H1 (cell line): ENCODE measurements at regions of chr5 and their contacts with region 1.

Region 1: DNA sequence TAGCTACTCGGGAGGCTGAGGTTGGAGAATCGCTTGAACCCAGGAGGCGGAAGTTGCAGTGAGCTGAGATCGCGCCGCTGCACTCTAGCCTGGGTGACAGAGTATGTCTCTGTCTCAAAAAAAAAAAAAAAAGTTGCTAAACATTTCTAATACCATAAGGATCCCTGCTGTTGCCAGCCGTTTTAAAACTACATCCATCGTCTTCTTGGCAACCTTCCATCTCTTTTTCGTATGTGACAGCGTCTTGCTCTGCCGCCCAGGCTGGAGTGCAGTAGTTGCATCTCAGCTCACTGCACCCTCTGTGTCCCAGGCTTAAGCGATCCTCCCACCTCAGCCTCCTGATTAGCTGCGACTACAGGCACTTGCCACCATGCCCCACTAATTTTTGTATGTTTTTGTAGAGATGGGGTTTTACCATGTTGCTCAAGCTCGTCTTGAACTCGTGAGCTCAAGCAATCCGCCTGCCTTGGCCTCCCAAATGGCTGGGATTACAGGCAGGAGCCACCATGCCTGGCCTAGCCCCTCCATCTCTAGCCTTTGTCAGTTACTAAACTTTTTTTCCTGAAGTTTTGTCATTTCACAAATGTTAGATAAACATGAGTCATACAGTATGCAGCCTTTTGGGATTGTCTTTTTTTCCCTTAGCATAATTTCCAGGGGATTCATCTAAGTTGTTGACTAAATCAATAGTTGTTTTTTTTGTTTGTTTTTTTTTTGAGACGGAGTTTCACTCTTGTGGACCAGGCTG is 13.5 kb downstream of the NSD1 start:
- DNase-seq: no peak
- H3K4me3 ChIP-seq: no peak overlapping the region
- H3K27ac ChIP-seq: no peak overlapping the region
- H3K4me1 ChIP-seq: no peaks in the 10 kb centered on the region
- H3K27me3 ChIP-seq: no peaks in the 10 kb centered on the region
- CTCF ChIP-seq: no peak
- EP300 ChIP-seq: no peak
- POLR2A ChIP-seq: no peak
- RAD21 ChIP-seq: no peak

Region 2: DNA sequence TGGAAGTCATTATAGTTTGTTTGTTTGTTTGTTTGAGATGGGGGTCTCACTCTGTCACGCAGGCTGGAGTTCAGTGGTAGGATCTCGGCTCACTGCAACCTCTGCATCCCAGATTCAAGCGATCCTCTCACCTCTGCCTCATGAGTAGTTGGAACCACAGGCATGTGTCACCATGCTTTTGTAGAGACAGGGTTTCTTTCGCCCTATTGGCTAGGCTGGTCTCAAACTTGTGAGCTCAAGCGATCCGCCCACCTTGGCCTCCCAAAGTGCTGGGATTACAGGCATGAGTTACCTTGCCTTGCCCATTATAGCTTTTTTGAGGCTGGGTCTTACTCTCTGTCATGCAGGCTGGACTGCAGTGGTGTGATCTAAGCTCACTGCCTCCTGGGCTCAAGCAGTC is 15.3 kb after region 1 on chr5:
- CTCF ChIA-PET with region 1: no interaction called
- POLR2A ChIA-PET with region 1: interaction called, 21 read pairs
- DNase-seq: no peak
- H3K4me3 ChIP-seq: no peak overlapping the region
- H3K27ac ChIP-seq: no peak overlapping the region
- H3K4me1 ChIP-seq: no peaks in the 10 kb centered on the region
- H3K27me3 ChIP-seq: no peaks in the 10 kb centered on the region
- CTCF ChIP-seq: no peak
- EP300 ChIP-seq: no peak
- POLR2A ChIP-seq: no peak
- RAD21 ChIP-seq: no peak

Region 3: GRCh38 chr5:177194274-177194673 is 47.2 kb after region 1 on chr5:
- CTCF ChIA-PET with region 1: no interaction called
- POLR2A ChIA-PET with region 1: no interaction called
- DNase-seq: peak in 1 of 2 experiments; percentile 2
- H3K4me3 ChIP-seq: no peak overlapping the region
- H3K27ac ChIP-seq: no peak overlapping the region
- H3K4me1 ChIP-seq: no peaks in the 10 kb centered on the region
- H3K27me3 ChIP-seq: no peaks in the 10 kb centered on the region
- CTCF ChIP-seq: no peak
- EP300 ChIP-seq: no peak
- POLR2A ChIP-seq: no peak
- RAD21 ChIP-seq: no peak